GM10248 (cell line): ENCODE measurements at regions of chr20 and their contacts with region 1.

Region 1: DNA sequence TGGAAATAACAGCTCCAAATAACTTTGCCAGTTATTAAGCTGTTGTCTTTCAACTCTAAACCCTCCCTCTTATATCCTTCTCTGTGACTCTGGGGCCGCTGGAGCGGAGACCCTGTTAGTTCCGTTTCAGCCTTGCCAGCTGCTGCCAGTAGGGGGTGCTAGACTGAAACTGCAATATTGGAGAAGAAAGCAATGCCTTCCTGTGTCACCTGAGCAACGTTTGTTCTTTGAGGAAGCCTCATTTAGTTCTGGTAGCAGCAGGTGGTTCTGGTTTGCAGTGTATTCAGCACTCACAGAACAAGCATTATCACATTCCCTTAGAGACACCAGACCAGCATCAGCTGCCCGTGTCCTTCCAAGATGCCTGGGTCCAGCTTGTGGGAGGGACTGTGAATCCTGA is 22.9 kb upstream of the JAG1 start:
- DNase-seq: peak; percentile 23
- CTCF ChIP-seq: peak; percentile 51

Region 2: DNA sequence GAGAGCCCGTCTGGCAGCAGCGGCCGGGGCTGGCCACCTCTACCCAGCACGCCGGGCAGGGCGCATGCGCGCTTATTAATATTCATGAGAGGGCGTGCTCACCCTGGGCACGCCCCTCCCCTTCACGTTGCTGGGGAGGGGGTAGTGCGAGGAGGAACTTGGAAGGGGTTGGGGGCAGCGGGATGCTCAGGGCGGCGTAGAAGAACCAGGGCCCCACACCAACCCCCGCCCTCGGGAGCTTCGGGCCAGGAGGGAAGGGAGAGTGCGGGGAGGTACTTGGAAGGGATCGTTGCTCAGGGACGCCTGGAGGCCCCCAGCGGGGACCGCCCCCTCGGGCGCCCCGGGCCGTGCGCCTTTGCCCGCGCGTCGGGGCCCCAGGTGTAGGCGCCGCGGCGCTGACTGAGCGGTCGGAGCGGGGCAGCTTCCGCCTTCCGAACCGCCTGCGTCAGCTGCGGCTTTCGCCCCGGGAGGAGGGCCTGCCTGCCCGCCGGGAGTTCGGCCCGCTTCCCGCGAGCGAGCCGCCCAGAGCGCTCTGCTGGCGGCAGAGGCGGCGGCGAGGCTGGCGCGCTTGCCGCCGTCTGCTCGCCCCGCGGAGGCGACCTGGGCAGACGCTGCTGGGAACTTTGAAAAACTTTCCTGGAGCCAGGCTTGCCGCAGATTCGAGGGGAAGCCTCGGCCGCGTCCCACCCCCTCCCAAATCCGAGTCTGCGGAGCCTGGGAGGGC is 22.5 kb before region 1 on chr20 and contains the start of gene JAG1:
- CTCF ChIA-PET with region 1: interaction called, 16 read pairs
- POLR2A ChIA-PET with region 1: no interaction called
- DNase-seq: peak; percentile 93
- CTCF ChIP-seq: no peak

Region 3: DNA sequence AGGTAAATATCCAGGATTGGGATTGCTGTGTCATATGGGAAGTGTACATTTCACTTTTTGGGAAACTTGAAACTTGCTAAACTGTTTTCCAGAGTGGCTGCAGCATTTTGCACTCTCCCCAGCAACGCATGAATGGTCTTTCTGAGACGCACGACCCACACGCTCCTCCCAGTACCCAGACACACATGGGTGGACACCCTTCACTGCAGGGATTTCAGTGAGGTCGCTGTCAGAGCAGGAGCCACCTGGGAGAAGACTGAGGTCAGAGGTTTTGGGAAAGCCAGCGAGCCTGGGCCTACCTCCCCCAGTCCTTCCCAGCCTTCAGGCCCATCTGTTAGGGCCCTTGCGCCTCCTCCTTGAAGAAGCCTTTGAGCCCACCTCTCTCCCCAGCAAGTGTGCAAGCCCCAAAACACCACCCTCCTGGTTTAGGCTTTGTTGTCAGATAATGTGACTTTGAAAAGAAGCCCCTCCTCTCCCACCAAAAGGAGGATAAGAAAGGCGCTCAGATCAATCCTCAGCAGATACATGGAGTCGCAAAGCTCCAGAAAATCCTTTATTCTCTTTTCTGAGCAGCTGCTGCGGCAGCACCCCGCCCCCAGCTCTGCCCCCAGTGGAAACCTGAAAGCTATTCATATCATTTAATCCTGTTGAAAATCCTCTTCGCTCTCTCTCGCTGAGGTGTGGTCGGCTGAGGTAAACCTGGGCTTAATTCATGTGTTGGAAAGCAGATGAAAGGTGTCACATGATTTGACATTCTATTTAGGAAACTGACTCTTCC is 10.1 kb before region 1 on chr20:
- CTCF ChIA-PET with region 1: interaction called, 13 read pairs
- POLR2A ChIA-PET with region 1: no interaction called
- DNase-seq: no peak
- CTCF ChIP-seq: no peak

Region 4: GRCh38 chr20:11496380-11496779 is 799.7 kb after region 1 on chr20:
- CTCF ChIA-PET with region 1: no interaction called
- POLR2A ChIA-PET with region 1: no interaction called
- DNase-seq: no peak
- CTCF ChIP-seq: no peak